Naive thymus-derived CD4-positive, alpha-beta T cell (primary cell): ENCODE measurements at regions of chr1 and their contacts with region 1.

Region 1: GRCh38 chr1:181347495-181348390 is 135.6 kb upstream of the CACNA1E start:
- DNase-seq: no peak
- ATAC-seq: no peak
- H3K4me3 ChIP-seq: no peak overlapping the region
- H3K4me3 Mint-ChIP-seq: no peak overlapping the region
- H3K27ac ChIP-seq: no peak overlapping the region
- H3K27ac Mint-ChIP-seq: no peak overlapping the region
- H3K4me1 ChIP-seq: peaks cover 0 to 9% of the 10 kb centered on the region in 2 donors
- H3K4me1 Mint-ChIP-seq: peaks cover 0 to 33% (median 21%) of the 10 kb centered on the region in 7 donors
- H3K27me3 ChIP-seq: no peaks in the 10 kb centered on the region
- H3K27me3 Mint-ChIP-seq: peaks cover 0 to 3% (median 0%) of the 10 kb centered on the region in 5 donors

Region 2: DNA sequence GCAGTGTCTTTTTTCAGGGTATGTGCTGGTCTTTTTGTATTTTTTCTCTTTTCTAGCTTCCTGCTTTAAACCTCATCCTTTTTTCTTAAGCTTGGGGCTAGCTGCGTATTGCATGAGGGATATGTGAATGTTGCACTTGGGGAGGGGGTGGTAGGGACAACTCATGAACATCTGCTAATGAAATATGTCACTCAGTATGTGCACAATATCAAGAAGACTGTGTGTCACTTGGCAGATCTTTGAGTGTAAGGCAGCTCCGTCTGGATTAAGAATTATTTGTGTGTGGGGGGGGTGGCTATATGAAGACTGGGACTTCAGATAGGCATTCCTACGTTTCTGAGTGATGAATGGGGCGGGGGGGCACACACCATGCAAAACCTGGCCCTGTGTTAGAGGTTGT is 34.8 kb before region 1 on chr1:
- CTCF ChIA-PET with region 1: no interaction called
- POLR2A ChIA-PET with region 1: no interaction called
- intact Hi-C with region 1: loop called in 1 of 2 experiments (anchors 5 kb)
- DNase-seq: no peak
- ATAC-seq: no peak
- H3K4me3 ChIP-seq: no peak overlapping the region
- H3K4me3 Mint-ChIP-seq: no peak overlapping the region
- H3K27ac ChIP-seq: no peak overlapping the region
- H3K27ac Mint-ChIP-seq: no peak overlapping the region
- H3K4me1 ChIP-seq: peaks cover 0 to 2% of the 10 kb centered on the region in 2 donors
- H3K4me1 Mint-ChIP-seq: peaks cover 10 to 27% (median 16%) of the 10 kb centered on the region in 7 donors
- H3K27me3 ChIP-seq: peaks cover 0 to 24% of the 10 kb centered on the region in 2 donors
- H3K27me3 Mint-ChIP-seq: peaks cover 45 to 58% (median 48%) of the 10 kb centered on the region in 5 donors

Region 3: GRCh38 chr1:181324797-181325616 is 22.7 kb before region 1 on chr1:
- CTCF ChIA-PET with region 1: no interaction called
- POLR2A ChIA-PET with region 1: no interaction called
- intact Hi-C with region 1: loop called in 1 of 2 experiments (anchors 2 kb)
- DNase-seq: peak in 1 of 9 donors; percentile 33
- ATAC-seq: peak; percentile 31
- H3K4me3 ChIP-seq: no peak overlapping the region
- H3K4me3 Mint-ChIP-seq: no peak overlapping the region
- H3K27ac ChIP-seq: no peak overlapping the region
- H3K27ac Mint-ChIP-seq: peak overlapping the region in 1 of 9 donors; percentile 65
- H3K4me1 ChIP-seq: no peaks in the 10 kb centered on the region
- H3K4me1 Mint-ChIP-seq: peaks cover 3 to 15% (median 7%) of the 10 kb centered on the region in 7 donors
- H3K27me3 ChIP-seq: no peaks in the 10 kb centered on the region
- H3K27me3 Mint-ChIP-seq: peaks cover 0 to 16% (median 1%) of the 10 kb centered on the region in 5 donors

Region 4: DNA sequence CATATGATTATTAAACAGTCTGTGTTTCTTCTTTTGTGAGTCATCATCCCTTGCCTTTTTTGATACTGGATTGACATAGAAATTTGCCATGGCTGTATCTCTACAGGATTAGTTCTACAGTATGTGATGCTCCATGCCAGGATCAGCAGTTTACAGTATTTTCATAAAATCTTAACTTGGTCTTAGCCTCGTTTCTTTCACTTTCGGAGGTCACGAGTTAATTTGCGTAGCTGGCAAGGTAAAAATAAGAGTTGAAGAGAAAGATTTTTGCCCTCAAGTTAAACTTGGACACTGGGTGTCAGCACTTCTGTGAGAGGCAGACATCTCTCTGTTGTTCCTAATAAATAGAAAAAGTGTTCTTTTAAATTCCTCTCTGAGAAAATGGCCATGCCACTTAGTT is 214.7 kb after region 1 on chr1:
- CTCF ChIA-PET with region 1: no interaction called
- POLR2A ChIA-PET with region 1: no interaction called
- intact Hi-C with region 1: no loop called
- DNase-seq: no peak
- ATAC-seq: no peak
- H3K4me3 ChIP-seq: no peak overlapping the region
- H3K4me3 Mint-ChIP-seq: no peak overlapping the region
- H3K27ac ChIP-seq: no peak overlapping the region
- H3K27ac Mint-ChIP-seq: no peak overlapping the region
- H3K4me1 ChIP-seq: no peaks in the 10 kb centered on the region
- H3K4me1 Mint-ChIP-seq: no peaks in the 10 kb centered on the region
- H3K27me3 ChIP-seq: no peaks in the 10 kb centered on the region
- H3K27me3 Mint-ChIP-seq: peaks cover 0 to 25% (median 4%) of the 10 kb centered on the region in 5 donors